Vagina (tissue), 2 donors: ENCODE measurements at regions of chr5 and their contacts with region 1.

Region 1: DNA sequence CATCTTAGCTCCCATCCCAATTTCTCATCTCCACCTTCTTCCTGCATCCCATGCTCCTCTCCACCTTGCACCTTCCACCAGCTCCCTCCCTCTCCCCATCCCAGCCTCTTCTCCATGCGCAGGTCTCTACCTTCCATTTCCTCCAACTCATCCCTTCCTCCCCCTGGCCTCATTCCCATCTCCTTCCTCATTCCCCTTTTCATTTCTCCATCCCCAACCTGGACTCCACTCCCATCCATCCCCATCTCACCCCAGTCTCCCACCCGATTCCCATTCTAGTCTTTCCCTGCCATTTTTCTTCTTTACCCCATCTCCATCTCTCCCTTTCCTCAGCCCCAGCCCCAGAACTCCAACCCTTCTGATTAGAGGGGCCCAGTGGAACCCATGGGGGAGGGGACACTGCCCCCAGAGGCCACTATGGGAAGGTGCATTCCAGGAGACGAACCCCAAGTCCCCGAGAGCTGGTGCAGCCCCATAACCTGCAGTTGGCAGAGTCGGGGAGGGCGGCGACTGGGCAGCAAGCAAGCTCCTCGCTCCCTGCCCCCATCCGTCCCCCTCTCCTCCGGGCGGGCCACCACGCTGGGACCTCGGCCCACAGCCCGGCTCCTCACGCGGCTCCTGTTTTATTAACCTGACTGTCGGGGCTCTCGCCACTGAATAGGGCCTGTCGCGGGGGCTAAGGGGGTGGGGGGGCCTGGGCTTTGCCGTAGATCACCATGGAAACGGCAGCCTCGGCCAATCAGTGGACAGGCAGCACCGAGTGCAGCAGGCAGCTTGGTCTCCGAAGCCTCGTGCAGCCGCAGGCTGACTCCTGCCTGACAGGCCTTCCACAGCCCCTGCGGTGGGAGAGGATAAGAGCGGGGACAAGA is 66.7 kb downstream of the PCDH1 start:
- DNase-seq: no peak
- H3K4me3 ChIP-seq: no peak overlapping the region
- H3K27ac ChIP-seq: no peak overlapping the region
- H3K4me1 ChIP-seq: peaks cover 8% of the 10 kb centered on the region
- H3K27me3 ChIP-seq: no peaks in the 10 kb centered on the region
- CTCF ChIP-seq: no peak
- POLR2A ChIP-seq: no peak

Region 2: GRCh38 chr5:141849375-141850243 is 38.1 kb after region 1 on chr5:
- intact Hi-C with region 1: loop called (anchors 2 kb)
- DNase-seq: no peak
- H3K4me3 ChIP-seq: peak overlapping the region; percentile 58 to 86
- H3K27ac ChIP-seq: peak overlapping the region; percentile 99
- H3K4me1 ChIP-seq: peaks cover 34% of the 10 kb centered on the region
- H3K27me3 ChIP-seq: no peaks in the 10 kb centered on the region
- CTCF ChIP-seq: peak in 1 of 3 experiments; percentile 20
- POLR2A ChIP-seq: peak in 1 of 2 donors; percentile 58